HepG2 (cell line): ENCODE measurements at regions of chr19 and their contacts with region 1.

Region 1: GRCh38 chr19:6297202-6297601 is 17.4 kb upstream of the MLLT1 start:
- DNase-seq: no peak
- ATAC-seq: no peak
- H3K4me3 ChIP-seq: no peak overlapping the region
- H3K27ac ChIP-seq: no peak overlapping the region
- H3K4me1 ChIP-seq: no peaks in the 10 kb centered on the region
- H3K27me3 ChIP-seq: no peaks in the 10 kb centered on the region
- CTCF ChIP-seq: no peak
- EP300 ChIP-seq: no peak
- POLR2A ChIP-seq: no peak
- RAD21 ChIP-seq: no peak

Region 2: GRCh38 chr19:5839065-5840017 is 457.9 kb before region 1 on chr19 and contains the start of gene FUT6:
- CTCF ChIA-PET with region 1: no interaction called
- POLR2A ChIA-PET with region 1: no interaction called
- in situ Hi-C with region 1: no loop called
- intact Hi-C with region 1: no loop called
- DNase-seq: peak; percentile 59
- ATAC-seq: peak; percentile 70
- H3K4me3 ChIP-seq: peak within 1 kb of the TSS; percentile 69 to 84 (median 75)
- H3K27ac ChIP-seq: peak within 1 kb of the TSS; percentile 80
- H3K4me1 ChIP-seq: peaks cover 58% of the 10 kb centered on the region
- H3K27me3 ChIP-seq: no peaks in the 10 kb centered on the region; a peak in 1 of 5 replicates
- CTCF ChIP-seq: 0 out of 2 replicates have a peak, but pooled peaks have one; percentile 6
- EP300 ChIP-seq: 0 out of 4 replicates have a peak, but pooled peaks of 1 of the 2 experiments have one; percentile 55
- POLR2A ChIP-seq: peak in 1 of 2 experiments; percentile 63; a peak in 2 of 4 replicates
- RAD21 ChIP-seq: no peak
- total RNA-seq, gene FUT6: 5.0 and 8.2 TPM in 2 replicates

Region 3: GRCh38 chr19:6218491-6219162 is 78.6 kb before region 1 on chr19:
- CTCF ChIA-PET with region 1: interaction called, 10 read pairs
- POLR2A ChIA-PET with region 1: no interaction called
- in situ Hi-C with region 1: no loop called
- intact Hi-C with region 1: no loop called
- DNase-seq: peak; percentile 77
- ATAC-seq: peak; percentile 73
- H3K4me3 ChIP-seq: no peak overlapping the region
- H3K27ac ChIP-seq: no peak overlapping the region
- H3K4me1 ChIP-seq: no peaks in the 10 kb centered on the region
- H3K27me3 ChIP-seq: no peaks in the 10 kb centered on the region
- CTCF ChIP-seq: peak; percentile 98
- EP300 ChIP-seq: no peak
- POLR2A ChIP-seq: no peak
- RAD21 ChIP-seq: peak; percentile 87

Region 4: DNA sequence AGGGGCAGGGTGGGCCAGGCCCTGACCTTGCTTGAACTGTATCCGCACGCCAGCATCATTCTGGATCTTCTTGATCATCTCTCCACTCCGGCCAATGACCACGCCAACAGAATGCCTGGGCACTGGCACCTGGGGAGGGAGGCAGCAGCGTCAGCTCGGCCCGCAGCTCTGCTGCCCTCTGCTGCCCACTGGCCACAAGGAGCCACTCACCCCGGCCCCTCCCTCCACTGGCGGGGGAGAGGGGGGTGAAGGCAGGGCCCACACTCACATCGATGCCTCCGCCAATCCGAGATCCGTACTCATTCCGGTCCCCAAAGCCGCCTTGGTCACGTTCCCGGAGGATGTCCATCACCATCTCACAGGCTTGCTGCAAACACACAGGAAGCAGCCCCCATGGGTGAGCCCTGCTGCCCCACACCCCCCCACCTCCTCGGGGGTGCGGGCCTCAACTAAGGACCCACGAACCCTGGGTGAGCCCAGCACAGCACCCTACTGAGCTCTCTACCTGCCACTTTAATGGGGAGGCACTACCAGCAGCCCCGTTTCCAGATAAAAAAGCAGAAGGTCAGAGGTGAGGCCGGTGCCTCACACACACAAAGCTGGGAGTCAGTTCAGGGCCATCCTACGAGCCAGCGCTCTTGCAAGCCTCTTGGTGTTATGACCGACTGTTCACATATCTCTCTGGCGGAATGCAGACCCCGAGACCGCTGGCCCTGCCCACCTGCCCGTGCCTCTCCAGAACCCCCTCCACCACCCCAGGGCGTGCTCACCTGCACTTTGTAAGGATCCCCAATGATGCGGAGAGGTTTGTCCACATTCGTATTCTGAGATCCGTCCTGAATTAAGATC is 120.7 kb after region 1 on chr19:
- CTCF ChIA-PET with region 1: no interaction called
- POLR2A ChIA-PET with region 1: no interaction called
- in situ Hi-C with region 1: no loop called
- intact Hi-C with region 1: no loop called
- DNase-seq: no peak
- ATAC-seq: peak; percentile 33
- H3K4me3 ChIP-seq: no peak overlapping the region
- H3K27ac ChIP-seq: no peak overlapping the region
- H3K4me1 ChIP-seq: peaks cover 13% of the 10 kb centered on the region
- H3K27me3 ChIP-seq: no peaks in the 10 kb centered on the region
- CTCF ChIP-seq: peak; percentile 65
- EP300 ChIP-seq: no peak
- POLR2A ChIP-seq: no peak
- RAD21 ChIP-seq: 0 out of 2 replicates have a peak, but pooled peaks have one; percentile 14